ENCODE measurements at regions of chr2 and their contacts with region 1.

Region 1: DNA sequence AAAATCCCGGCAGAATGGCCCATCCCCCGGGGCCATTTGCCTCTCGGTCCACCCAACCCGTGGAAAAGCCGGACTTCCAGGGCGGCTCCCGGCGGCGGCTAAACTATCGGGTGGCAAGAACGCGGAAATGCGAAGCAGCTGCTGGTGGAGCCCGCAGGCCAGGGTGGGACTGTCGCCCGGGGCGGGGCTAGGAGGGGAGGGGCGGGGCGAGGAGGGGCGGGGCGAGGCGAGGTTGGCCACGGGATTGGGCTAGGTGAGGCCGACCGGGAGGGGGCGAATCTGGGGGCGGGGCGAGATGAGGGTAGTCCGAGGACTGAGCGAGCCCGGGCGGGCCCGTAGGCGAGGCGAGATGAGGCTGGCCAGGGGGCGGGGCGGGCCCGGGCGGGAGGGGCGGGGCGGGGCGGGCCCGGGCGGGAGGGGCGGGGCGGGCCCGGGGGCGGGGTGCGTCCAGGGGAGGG is 315 bp upstream of the SLC66A3 start:
- DNase-seq: peak; percentile 99
- H3K4me3 Mint-ChIP-seq: peak overlapping the region; percentile 63
- H3K27ac Mint-ChIP-seq: no peak overlapping the region
- H3K4me1 Mint-ChIP-seq: no peaks in the 10 kb centered on the region
- H3K27me3 Mint-ChIP-seq: no peaks in the 10 kb centered on the region
- CTCF ChIP-seq: no peak

Region 2: DNA sequence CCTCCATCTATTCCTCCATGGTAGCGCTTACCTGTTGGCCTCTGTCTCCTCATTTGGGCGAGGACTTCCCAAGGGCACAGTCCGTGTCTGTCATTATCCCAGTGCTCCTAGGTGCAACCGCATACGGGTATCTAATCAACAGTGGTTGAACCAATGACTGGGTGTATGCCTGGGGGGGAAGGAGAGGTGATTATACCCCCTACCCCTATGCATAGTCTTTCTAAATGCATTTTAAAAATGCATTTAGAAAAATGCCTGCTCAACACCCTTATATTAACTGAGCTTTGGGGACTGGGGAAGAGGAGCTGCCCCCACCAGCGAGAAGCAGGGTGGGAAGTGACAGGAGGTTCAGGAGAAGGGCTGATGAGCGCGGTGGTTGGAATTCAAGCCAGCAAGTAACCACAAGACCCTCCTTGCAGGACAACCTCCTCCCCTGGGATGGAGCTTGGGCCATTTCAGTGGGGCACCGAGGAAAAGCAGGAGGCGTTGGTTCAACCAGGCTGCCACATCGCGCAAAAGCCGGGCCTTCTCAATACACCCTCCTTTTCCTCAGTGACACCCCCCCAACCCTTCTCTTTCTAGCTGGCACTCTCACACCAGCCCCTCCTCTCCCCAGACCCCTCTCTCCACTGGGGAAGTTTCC is 199.1 kb before region 1 on chr2:
- CTCF ChIA-PET with region 1: interaction called, 11 read pairs
- intact Hi-C with region 1: no loop called
- DNase-seq: no peak
- H3K4me3 Mint-ChIP-seq: no peak overlapping the region
- H3K27ac Mint-ChIP-seq: no peak overlapping the region
- H3K4me1 Mint-ChIP-seq: no peaks in the 10 kb centered on the region
- H3K27me3 Mint-ChIP-seq: peaks cover 48% of the 10 kb centered on the region
- CTCF ChIP-seq: no peak

Region 3: DNA sequence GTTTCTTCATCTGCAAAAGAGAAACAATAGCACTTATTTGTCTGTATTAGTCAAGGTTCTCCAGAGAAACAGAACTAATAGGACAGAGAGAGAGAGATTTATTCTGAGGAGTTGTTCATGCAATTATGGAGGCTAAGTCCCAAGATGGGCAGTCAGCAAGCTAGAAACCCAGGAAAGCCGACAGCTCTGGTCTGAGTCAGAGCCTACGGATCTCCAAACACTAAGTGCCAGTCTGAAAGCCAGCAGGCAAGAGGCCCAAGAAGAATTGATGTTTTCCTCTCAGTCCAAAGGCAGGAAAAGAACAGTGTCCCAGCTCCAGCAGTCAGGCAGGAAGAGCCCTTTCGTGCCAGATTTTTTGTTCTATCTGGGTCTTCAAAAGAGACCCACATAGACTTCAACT is 36.2 kb before region 1 on chr2:
- CTCF ChIA-PET with region 1: no interaction called
- intact Hi-C with region 1: no loop called
- DNase-seq: no peak
- H3K4me3 Mint-ChIP-seq: no peak overlapping the region
- H3K27ac Mint-ChIP-seq: no peak overlapping the region
- H3K4me1 Mint-ChIP-seq: peaks cover 18% of the 10 kb centered on the region
- H3K27me3 Mint-ChIP-seq: peaks cover 18% of the 10 kb centered on the region
- CTCF ChIP-seq: no peak

Region 4: DNA sequence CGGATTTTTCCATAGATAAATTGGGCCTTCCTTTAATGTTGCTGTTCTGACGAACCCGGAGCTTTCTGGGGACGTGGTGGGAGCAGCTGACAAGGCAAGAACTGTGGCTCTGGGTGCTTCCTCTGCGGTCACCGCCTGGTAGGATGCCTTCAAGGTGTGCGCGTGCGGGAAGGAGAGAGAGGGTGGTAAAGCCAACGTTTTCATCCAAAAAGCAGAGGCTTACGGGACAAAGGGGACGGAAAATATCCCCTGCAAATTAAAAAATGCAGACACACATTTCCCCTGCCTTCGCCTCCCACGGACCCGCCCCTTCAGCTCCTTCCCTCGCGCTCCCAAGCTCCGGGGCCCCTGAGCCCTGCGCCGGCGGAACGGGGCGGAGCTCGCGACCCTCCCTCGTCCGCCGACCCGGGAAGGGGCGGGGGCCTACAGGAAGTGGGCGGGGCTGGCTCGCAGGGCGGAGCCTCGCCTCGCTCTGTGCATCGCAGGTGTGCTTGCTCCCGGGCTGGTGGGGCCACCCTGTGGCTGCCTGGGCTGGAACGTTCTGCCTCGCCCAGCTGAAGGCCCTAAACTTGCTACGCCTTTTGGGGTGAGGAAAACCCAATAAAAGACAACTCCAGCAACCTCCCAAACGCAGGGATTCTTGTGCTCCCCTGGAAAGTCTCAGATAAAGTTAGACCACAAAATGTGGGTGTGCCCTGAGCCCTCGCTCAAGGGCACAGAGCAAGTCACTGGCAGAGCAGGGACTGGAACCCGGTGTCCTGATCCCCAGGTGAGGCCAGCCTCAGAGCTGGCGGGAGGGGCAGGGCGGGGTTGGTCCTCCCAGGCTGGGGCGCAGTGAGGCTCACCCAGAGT is 25.1 kb before region 1 on chr2:
- CTCF ChIA-PET with region 1: interaction called, 21 read pairs
- intact Hi-C with region 1: no loop called
- DNase-seq: peak; percentile 84
- H3K4me3 Mint-ChIP-seq: peak overlapping the region; percentile 21
- H3K27ac Mint-ChIP-seq: no peak overlapping the region
- H3K4me1 Mint-ChIP-seq: peaks cover 14% of the 10 kb centered on the region
- H3K27me3 Mint-ChIP-seq: peaks cover 35% of the 10 kb centered on the region
- CTCF ChIP-seq: no peak